Calu3 (cell line): ENCODE measurements at regions of chr2 and their contacts with region 1.

Region 1: GRCh38 chr2:240640939-240641338 is 15.7 kb downstream of the GPR35 start:
- DNase-seq: peak; percentile 83
- H3K4me3 Mint-ChIP-seq: no peak overlapping the region
- H3K27ac Mint-ChIP-seq: no peak overlapping the region
- H3K4me1 Mint-ChIP-seq: no peaks in the 10 kb centered on the region
- H3K27me3 Mint-ChIP-seq: peaks cover 78% of the 10 kb centered on the region
- CTCF ChIP-seq: peak; percentile 61

Region 2: GRCh38 chr2:240840435-240841080 is 199.6 kb after region 1 on chr2:
- CTCF ChIA-PET with region 1: interaction called, 15 read pairs
- intact Hi-C with region 1: no loop called
- DNase-seq: peak; percentile 87
- H3K4me3 Mint-ChIP-seq: no peak overlapping the region
- H3K27ac Mint-ChIP-seq: no peak overlapping the region
- H3K4me1 Mint-ChIP-seq: no peaks in the 10 kb centered on the region
- H3K27me3 Mint-ChIP-seq: peaks cover 80% of the 10 kb centered on the region
- CTCF ChIP-seq: peak; percentile 86

Region 3: DNA sequence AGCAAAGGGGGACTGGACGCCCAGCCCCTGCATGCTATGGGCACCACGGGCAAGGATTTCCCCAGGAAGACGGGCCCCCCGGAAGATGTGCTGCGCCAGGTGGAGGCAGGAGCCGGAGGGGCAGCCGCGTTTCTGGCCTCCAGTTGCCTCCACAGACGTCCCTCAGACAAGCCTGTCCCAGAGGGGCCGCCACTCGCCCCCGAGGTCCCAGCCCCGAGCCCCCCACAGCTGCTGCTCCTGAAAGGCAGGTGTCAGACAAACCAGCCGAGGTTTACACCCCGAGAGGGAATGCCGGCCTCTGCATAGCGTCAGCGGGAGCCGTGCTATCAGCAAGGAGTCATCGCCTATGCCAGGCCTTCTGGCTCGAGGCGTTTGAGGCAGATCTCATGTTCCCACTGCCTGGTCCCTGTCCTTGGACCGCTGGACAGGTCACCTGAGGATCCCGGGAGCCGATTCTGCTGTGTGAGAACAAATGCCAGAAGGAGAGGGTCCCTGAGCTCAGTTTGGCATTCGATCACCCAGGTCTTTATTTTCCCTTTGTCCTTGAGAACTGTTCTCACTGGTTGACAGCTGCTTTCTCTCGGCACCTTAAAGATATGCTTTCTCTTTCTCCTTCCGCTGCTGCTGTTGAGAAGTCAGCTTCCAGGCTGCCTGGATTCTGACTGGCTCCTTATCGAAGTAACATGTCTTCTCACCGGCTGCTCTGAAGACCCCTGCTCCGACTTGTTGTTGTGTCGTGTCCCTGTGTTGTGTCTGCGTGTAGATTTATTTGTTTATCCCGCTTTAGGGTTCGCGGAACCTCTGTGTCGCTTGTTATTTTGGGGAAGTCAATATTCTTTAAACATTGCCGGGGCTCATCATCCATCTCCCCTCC is 285.8 kb after region 1 on chr2:
- CTCF ChIA-PET with region 1: no interaction called
- intact Hi-C with region 1: no loop called
- DNase-seq: peak; percentile 6
- H3K4me3 Mint-ChIP-seq: no peak overlapping the region
- H3K27ac Mint-ChIP-seq: no peak overlapping the region
- H3K4me1 Mint-ChIP-seq: no peaks in the 10 kb centered on the region
- H3K27me3 Mint-ChIP-seq: peaks cover 66% of the 10 kb centered on the region
- CTCF ChIP-seq: no peak

Region 4: GRCh38 chr2:240998120-240998994 is 357.4 kb after region 1 on chr2 and contains the start of gene SNED1:
- CTCF ChIA-PET with region 1: no interaction called
- intact Hi-C with region 1: no loop called
- DNase-seq: peak; percentile 84
- H3K4me3 Mint-ChIP-seq: peak within 1 kb of the TSS; percentile 66
- H3K27ac Mint-ChIP-seq: no peak within 1 kb of the TSS
- H3K4me1 Mint-ChIP-seq: no peaks in the 10 kb centered on the region
- H3K27me3 Mint-ChIP-seq: peaks cover 41% of the 10 kb centered on the region
- CTCF ChIP-seq: no peak
- total RNA-seq, gene SNED1: 0.76 and 0.86 TPM in 2 replicates